H1 (cell line): ENCODE measurements at regions of chr19 and their contacts with region 1.

Region 1: GRCh38 chr19:54029930-54030490 is 33.7 kb downstream of the VSTM1 start:
- DNase-seq: peak; percentile 50 to 86
- H3K4me3 ChIP-seq: no peak overlapping the region
- H3K27ac ChIP-seq: no peak overlapping the region
- H3K4me1 ChIP-seq: peaks cover 2 to 8% (median 4%) of the 10 kb centered on the region in 4 experiments; a peak in 6 of 7 replicates
- H3K27me3 ChIP-seq: no peaks in the 10 kb centered on the region
- CTCF ChIP-seq: peak; percentile 43 to 79 (median 75)
- EP300 ChIP-seq: no peak
- POLR2A ChIP-seq: no peak
- RAD21 ChIP-seq: peak; percentile 82 to 85

Region 2: DNA sequence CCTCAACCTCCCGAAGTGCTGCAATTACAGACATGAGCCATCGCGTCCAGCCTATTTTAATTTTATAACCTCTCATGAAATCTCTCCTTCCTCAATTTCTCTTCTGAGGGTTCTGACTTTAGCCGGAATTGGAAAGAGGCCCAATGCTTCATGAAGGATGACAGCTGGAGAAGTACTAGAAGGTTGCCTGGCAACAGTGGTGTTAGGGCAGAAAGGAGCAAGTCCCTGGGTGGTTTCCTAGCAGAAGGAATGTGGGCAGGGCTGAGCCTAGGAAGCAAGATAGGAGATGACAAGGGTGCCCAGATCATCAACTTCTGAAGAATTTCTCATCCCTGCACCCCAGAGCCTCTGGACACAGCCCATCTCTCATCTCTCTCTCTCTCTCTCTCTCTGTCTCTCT is 12.7 kb before region 1 on chr19:
- CTCF ChIA-PET with region 1: interaction called, 36 read pairs
- POLR2A ChIA-PET with region 1: interaction called, 4 read pairs
- DNase-seq: no peak
- H3K4me3 ChIP-seq: no peak overlapping the region
- H3K27ac ChIP-seq: no peak overlapping the region
- H3K4me1 ChIP-seq: peaks cover 0 to 10% (median 2%) of the 10 kb centered on the region in 4 experiments; a peak in 3 of 7 replicates
- H3K27me3 ChIP-seq: no peaks in the 10 kb centered on the region
- CTCF ChIP-seq: no peak
- EP300 ChIP-seq: no peak
- POLR2A ChIP-seq: no peak
- RAD21 ChIP-seq: no peak

Region 3: DNA sequence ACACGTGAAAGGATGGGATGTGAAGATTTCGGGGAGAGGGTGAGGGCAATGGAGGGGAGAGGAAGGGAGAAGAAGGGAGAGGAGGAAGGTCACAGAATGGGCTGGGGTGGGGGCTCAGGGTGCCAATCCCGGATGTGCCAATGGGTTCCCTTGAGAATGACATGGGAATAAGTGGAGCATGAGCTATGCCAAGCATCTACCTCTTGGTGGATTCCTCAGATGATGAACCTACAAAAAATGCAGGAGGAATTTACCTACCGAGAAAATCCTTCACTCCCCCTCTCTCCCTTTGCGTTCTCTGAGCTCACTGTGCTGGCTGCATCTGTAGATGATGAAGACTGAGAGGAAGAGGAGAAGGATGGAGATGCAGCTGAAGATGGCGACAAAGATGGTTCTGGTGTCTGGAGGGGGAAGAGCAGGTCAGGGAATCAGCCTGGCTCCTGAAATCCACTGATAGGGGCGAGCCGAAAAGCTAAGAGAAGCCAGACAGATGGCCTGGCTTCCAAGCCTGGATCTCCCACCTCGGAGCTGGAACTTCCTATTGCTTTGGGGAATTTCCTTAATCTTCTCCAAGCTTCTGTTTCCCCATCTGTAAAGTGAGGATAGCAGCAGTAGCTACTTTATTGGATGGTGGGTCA is 12.1 kb after region 1 on chr19:
- CTCF ChIA-PET with region 1: interaction called, 10 read pairs
- POLR2A ChIA-PET with region 1: interaction called, 8 read pairs
- DNase-seq: no peak
- H3K4me3 ChIP-seq: no peak overlapping the region
- H3K27ac ChIP-seq: no peak overlapping the region
- H3K4me1 ChIP-seq: peaks cover 0 to 3% (median 0%) of the 10 kb centered on the region in 4 experiments; a peak in 2 of 7 replicates
- H3K27me3 ChIP-seq: no peaks in the 10 kb centered on the region
- CTCF ChIP-seq: no peak
- EP300 ChIP-seq: no peak
- POLR2A ChIP-seq: no peak
- RAD21 ChIP-seq: no peak

Region 4: GRCh38 chr19:54096617-54097129 is 66.7 kb after region 1 on chr19:
- CTCF ChIA-PET with region 1: interaction called, 13 read pairs
- POLR2A ChIA-PET with region 1: interaction called, 3 read pairs
- DNase-seq: peak in 1 of 2 experiments; percentile 62
- H3K4me3 ChIP-seq: peak overlapping the region; percentile 9 to 64 (median 32); a peak in 7 of 8 replicates
- H3K27ac ChIP-seq: no peak overlapping the region
- H3K4me1 ChIP-seq: peaks cover 0 to 5% (median 1%) of the 10 kb centered on the region in 4 experiments; a peak in 4 of 7 replicates
- H3K27me3 ChIP-seq: peaks cover 6 to 29% (median 19%) of the 10 kb centered on the region in 4 experiments
- CTCF ChIP-seq: peak in 1 of 3 experiments; percentile 18; a peak in 1 of 4 replicates
- EP300 ChIP-seq: no peak
- POLR2A ChIP-seq: no peak
- RAD21 ChIP-seq: peak in 1 of 2 experiments; percentile 23; a peak in 1 of 4 replicates

Region 5: GRCh38 chr19:54106716-54107115 is 76.7 kb after region 1 on chr19:
- CTCF ChIA-PET with region 1: no interaction called
- POLR2A ChIA-PET with region 1: no interaction called
- DNase-seq: no peak
- H3K4me3 ChIP-seq: no peak overlapping the region
- H3K27ac ChIP-seq: no peak overlapping the region
- H3K4me1 ChIP-seq: 0 out of 7 replicates have a peak, but pooled peaks cover 0 to 2% (median 0%) of the 10 kb centered on the region in 4 experiments
- H3K27me3 ChIP-seq: no peaks in the 10 kb centered on the region
- CTCF ChIP-seq: no peak
- EP300 ChIP-seq: no peak
- POLR2A ChIP-seq: no peak
- RAD21 ChIP-seq: no peak

Region 6: GRCh38 chr19:54168174-54168917 is 138.3 kb after region 1 on chr19:
- CTCF ChIA-PET with region 1: no interaction called
- POLR2A ChIA-PET with region 1: no interaction called
- DNase-seq: peak in 1 of 2 experiments; percentile 100
- H3K4me3 ChIP-seq: peak overlapping the region in 2 of 4 experiments; percentile 5 to 34; a peak in 2 of 8 replicates
- H3K27ac ChIP-seq: no peak overlapping the region
- H3K4me1 ChIP-seq: peaks cover 0 to 10% (median 6%) of the 10 kb centered on the region in 4 experiments; a peak in 6 of 7 replicates
- H3K27me3 ChIP-seq: peaks cover 0 to 7% (median 4%) of the 10 kb centered on the region in 4 experiments; a peak in 4 of 7 replicates
- CTCF ChIP-seq: peak; percentile 81 to 92 (median 91)
- EP300 ChIP-seq: no peak
- POLR2A ChIP-seq: no peak
- RAD21 ChIP-seq: peak; percentile 57